PC-9 (cell line): ENCODE measurements at regions of chr3 and their contacts with region 1.

Region 1: DNA sequence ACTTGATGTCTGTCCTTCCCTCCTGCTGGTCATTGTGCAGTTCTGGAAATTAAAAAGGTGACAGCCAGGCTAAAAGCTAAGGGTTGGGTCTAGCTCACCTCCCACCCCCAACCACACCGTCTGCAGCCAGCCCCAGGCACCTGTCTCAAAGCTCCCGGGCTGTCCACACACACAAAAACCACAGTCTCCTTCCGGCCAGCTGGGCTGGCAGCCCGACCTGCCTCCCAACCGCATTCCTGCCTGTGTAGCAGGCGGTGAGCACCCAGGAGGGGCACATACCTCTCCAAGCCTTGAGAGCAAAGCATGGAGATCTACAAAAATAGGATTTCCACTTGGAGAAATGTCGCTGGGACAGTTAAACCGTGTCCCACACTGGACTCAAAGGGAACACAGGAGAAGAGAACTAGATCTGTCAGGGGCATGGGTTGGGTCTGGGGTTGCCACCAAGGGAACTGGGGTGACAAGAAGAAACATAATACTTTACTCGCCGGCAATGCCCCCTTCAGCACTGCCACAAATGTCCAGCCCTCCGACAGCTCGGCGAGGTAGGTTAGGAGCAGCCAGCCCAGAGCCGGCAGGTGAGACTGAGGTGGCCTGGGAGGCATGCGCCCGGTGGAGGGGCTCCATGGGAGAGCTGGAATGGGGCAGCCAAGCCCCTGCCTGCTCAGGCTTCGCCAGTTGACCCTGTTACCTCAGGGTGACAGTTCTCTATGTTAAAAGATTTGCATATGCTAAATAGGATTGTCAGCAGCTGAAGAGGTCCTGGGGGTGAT is 52.2 kb downstream of the EXOG start:
- DNase-seq: peak; percentile 53 to 78
- H3K4me3 ChIP-seq: no peak overlapping the region
- H3K27ac ChIP-seq: no peak overlapping the region
- H3K4me1 ChIP-seq: no peaks in the 10 kb centered on the region
- H3K27me3 ChIP-seq: peaks cover 12% of the 10 kb centered on the region; the same call in 1 of the 2 replicates
- CTCF ChIP-seq: no peak

Region 2: DNA sequence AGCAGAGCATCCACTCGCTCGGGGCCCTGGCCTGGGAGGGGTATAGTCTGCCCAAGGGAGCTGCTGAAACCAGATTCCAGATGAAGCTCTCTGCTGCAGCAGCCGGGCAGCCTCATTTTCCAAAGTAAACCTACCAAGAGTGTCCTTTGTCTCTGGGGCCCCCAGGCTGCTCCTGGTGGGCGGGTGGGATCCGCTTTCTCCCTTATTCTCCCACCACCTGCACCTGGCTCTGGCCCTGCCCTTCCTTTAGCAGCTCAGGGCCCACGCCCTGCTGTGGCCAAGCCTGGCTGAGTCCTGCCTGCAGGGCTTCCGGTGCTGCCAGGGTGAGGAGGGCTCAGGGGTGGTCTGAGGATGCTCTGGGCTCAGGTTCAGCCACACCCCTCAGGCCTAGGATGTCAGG is 88.1 kb after region 1 on chr3:
- CTCF ChIA-PET with region 1: no interaction called
- POLR2A ChIA-PET with region 1: no interaction called
- intact Hi-C with region 1: loop called (anchors 1 kb)
- DNase-seq: peak in 1 of 2 experiments; percentile 37
- H3K4me3 ChIP-seq: no peak overlapping the region
- H3K27ac ChIP-seq: no peak overlapping the region
- H3K4me1 ChIP-seq: no peaks in the 10 kb centered on the region
- H3K27me3 ChIP-seq: peaks cover 32% of the 10 kb centered on the region; the same call in 1 of the 2 replicates
- CTCF ChIP-seq: no peak